ENCODE measurements at regions of chr11 and their contacts with region 1.

Region 1: GRCh38 chr11:122853971-122854446 is 15.7 kb downstream of the CRTAM start:
- DNase-seq: no peak
- ATAC-seq: no peak
- H3K4me3 ChIP-seq: no peak overlapping the region
- H3K27ac ChIP-seq: no peak overlapping the region
- H3K4me1 ChIP-seq: peaks cover 24% of the 10 kb centered on the region
- H3K27me3 ChIP-seq: no peaks in the 10 kb centered on the region
- CTCF ChIP-seq: peak; percentile 53 to 78 (median 73)
- EP300 ChIP-seq: no peak
- POLR2A ChIP-seq: no peak
- RAD21 ChIP-seq: peak; percentile 87

Region 2: GRCh38 chr11:122628810-122629555 is 225.0 kb before region 1 on chr11:
- CTCF ChIA-PET with region 1: interaction called, 27 read pairs
- POLR2A ChIA-PET with region 1: no interaction called
- RAD21 ChIA-PET with region 1: interaction called, 9 read pairs
- SMC1A ChIA-PET with region 1: interaction called, 12 read pairs
- in situ Hi-C with region 1: no loop called
- intact Hi-C with region 1: loop called (anchors 1 kb)
- DNase-seq: no peak
- ATAC-seq: peak; percentile 95
- H3K4me3 ChIP-seq: no peak overlapping the region
- H3K27ac ChIP-seq: no peak overlapping the region
- H3K4me1 ChIP-seq: no peaks in the 10 kb centered on the region
- H3K27me3 ChIP-seq: no peaks in the 10 kb centered on the region; a peak in 2 of 4 replicates
- CTCF ChIP-seq: peak; percentile 76 to 81 (median 80)
- EP300 ChIP-seq: no peak
- POLR2A ChIP-seq: no peak
- RAD21 ChIP-seq: peak; percentile 84

Region 3: GRCh38 chr11:122721964-122722266 is 132.1 kb before region 1 on chr11:
- CTCF ChIA-PET with region 1: no interaction called
- POLR2A ChIA-PET with region 1: no interaction called
- RAD21 ChIA-PET with region 1: no interaction called
- SMC1A ChIA-PET with region 1: no interaction called
- in situ Hi-C with region 1: no loop called
- intact Hi-C with region 1: no loop called
- DNase-seq: no peak
- ATAC-seq: no peak
- H3K4me3 ChIP-seq: no peak overlapping the region
- H3K27ac ChIP-seq: no peak overlapping the region
- H3K4me1 ChIP-seq: peaks cover 20% of the 10 kb centered on the region
- H3K27me3 ChIP-seq: peaks cover 0 to 1% of the 10 kb centered on the region in 2 experiments; a peak in 2 of 4 replicates
- CTCF ChIP-seq: no peak
- EP300 ChIP-seq: no peak
- POLR2A ChIP-seq: no peak
- RAD21 ChIP-seq: no peak

Region 4: GRCh38 chr11:122781378-122782195 is 72.4 kb before region 1 on chr11:
- CTCF ChIA-PET with region 1: interaction called, 490 read pairs
- POLR2A ChIA-PET with region 1: interaction called, 4 read pairs
- RAD21 ChIA-PET with region 1: interaction called, 6 read pairs
- SMC1A ChIA-PET with region 1: interaction called, 15 read pairs
- in situ Hi-C with region 1: no loop called
- intact Hi-C with region 1: no loop called
- DNase-seq: no peak
- ATAC-seq: peak; percentile 96
- H3K4me3 ChIP-seq: no peak overlapping the region
- H3K27ac ChIP-seq: no peak overlapping the region
- H3K4me1 ChIP-seq: no peaks in the 10 kb centered on the region
- H3K27me3 ChIP-seq: no peaks in the 10 kb centered on the region; a peak in 1 of 4 replicates
- CTCF ChIP-seq: peak; percentile 84 to 91 (median 85)
- EP300 ChIP-seq: no peak
- POLR2A ChIP-seq: no peak
- RAD21 ChIP-seq: peak; percentile 87

Region 5: DNA sequence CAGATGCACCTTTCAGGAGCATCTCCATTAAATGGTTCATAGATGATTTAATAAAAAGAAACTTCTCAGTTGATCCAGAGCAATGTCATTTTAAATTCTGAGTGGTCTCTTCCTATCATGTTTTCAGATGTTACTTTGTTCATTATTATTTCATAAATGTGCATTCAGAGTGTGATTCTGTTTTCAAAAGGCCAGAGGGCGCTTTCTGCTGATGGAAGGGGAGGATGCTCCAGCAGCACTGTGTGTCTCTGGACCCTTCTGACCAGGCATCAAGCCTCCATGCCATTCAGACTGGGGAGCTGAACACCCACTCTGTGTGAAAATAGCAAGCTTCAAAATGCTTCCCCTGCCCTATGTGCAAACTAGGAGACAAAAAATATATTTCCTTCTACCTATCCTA is 39.6 kb before region 1 on chr11:
- CTCF ChIA-PET with region 1: interaction called, 484 read pairs
- POLR2A ChIA-PET with region 1: interaction called, 34 read pairs
- RAD21 ChIA-PET with region 1: interaction called, 293 read pairs
- SMC1A ChIA-PET with region 1: interaction called, 485 read pairs
- in situ Hi-C with region 1: no loop called
- intact Hi-C with region 1: loop called (anchors 1 kb)
- DNase-seq: no peak
- ATAC-seq: peak; percentile 93
- H3K4me3 ChIP-seq: no peak overlapping the region
- H3K27ac ChIP-seq: no peak overlapping the region
- H3K4me1 ChIP-seq: no peaks in the 10 kb centered on the region; the same call in 1 of the 2 replicates
- H3K27me3 ChIP-seq: no peaks in the 10 kb centered on the region
- CTCF ChIP-seq: peak; percentile 22 to 51 (median 28); a peak in 3 of 6 replicates
- EP300 ChIP-seq: no peak
- POLR2A ChIP-seq: no peak
- RAD21 ChIP-seq: peak; percentile 60

Region 6: GRCh38 chr11:122869622-122870021 is 15.6 kb after region 1 on chr11:
- CTCF ChIA-PET with region 1: interaction called, 275 read pairs
- POLR2A ChIA-PET with region 1: interaction called, 12 read pairs
- RAD21 ChIA-PET with region 1: interaction called, 46 read pairs
- SMC1A ChIA-PET with region 1: interaction called, 466 read pairs
- in situ Hi-C with region 1: no loop called
- intact Hi-C with region 1: no loop called
- DNase-seq: no peak
- ATAC-seq: peak; percentile 62
- H3K4me3 ChIP-seq: no peak overlapping the region
- H3K27ac ChIP-seq: no peak overlapping the region
- H3K4me1 ChIP-seq: no peaks in the 10 kb centered on the region; the same call in 1 of the 2 replicates
- H3K27me3 ChIP-seq: no peaks in the 10 kb centered on the region
- CTCF ChIP-seq: no peak
- EP300 ChIP-seq: no peak
- POLR2A ChIP-seq: no peak
- RAD21 ChIP-seq: no peak

Region 7: GRCh38 chr11:122920579-122920978 is 66.6 kb after region 1 on chr11:
- CTCF ChIA-PET with region 1: no interaction called
- POLR2A ChIA-PET with region 1: no interaction called
- RAD21 ChIA-PET with region 1: no interaction called
- SMC1A ChIA-PET with region 1: no interaction called
- in situ Hi-C with region 1: no loop called
- intact Hi-C with region 1: no loop called
- DNase-seq: no peak
- ATAC-seq: no peak
- H3K4me3 ChIP-seq: no peak overlapping the region
- H3K27ac ChIP-seq: no peak overlapping the region
- H3K4me1 ChIP-seq: no peaks in the 10 kb centered on the region
- H3K27me3 ChIP-seq: no peaks in the 10 kb centered on the region
- CTCF ChIP-seq: no peak
- EP300 ChIP-seq: no peak
- POLR2A ChIP-seq: no peak
- RAD21 ChIP-seq: no peak

Region 8: DNA sequence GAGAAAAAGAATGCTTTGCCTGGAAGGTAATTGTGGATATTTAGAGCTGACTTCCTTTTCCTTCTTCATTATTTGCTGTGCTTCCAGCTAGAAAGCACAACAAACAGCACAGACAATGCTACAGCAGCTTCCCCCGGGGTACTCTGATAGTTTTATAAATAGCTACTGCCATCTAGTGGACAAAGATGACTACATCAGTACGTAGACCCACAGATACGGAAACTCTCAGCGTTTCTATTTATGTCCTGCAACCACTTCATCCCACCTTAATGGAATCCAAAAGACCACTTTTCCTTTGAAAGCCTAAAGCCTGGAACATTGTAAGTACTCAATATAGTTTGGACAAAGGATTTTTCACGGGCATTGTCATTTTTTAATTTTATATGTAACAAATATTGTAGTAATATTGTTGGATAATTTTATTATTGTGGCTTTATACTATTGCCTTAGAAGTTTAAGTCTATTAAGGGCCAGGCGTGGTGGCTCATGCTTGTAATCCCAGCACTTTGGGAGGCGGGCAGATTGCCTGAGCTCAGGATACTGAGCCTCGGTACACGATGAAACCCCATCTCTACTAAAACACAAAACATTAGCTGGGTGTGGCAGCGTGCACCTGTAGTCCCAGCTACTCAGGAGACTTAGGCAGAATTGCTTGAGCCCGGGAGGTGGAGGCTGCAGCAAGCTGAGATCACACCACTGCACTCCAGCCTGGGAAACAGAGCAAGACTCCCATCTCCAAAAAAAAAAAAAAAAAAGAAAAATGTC is 200.5 kb after region 1 on chr11:
- CTCF ChIA-PET with region 1: interaction called, 387 read pairs
- POLR2A ChIA-PET with region 1: interaction called, 6 read pairs
- RAD21 ChIA-PET with region 1: interaction called, 50 read pairs
- SMC1A ChIA-PET with region 1: interaction called, 159 read pairs
- in situ Hi-C with region 1: no loop called
- intact Hi-C with region 1: no loop called
- DNase-seq: no peak
- ATAC-seq: peak; percentile 87
- H3K4me3 ChIP-seq: no peak overlapping the region
- H3K27ac ChIP-seq: no peak overlapping the region
- H3K4me1 ChIP-seq: no peaks in the 10 kb centered on the region; the same call in 1 of the 2 replicates
- H3K27me3 ChIP-seq: no peaks in the 10 kb centered on the region
- CTCF ChIP-seq: peak; percentile 61 to 74 (median 63)
- EP300 ChIP-seq: no peak
- POLR2A ChIP-seq: no peak
- RAD21 ChIP-seq: peak; percentile 58

Region 9: GRCh38 chr11:123357961-123358841 is 504.2 kb after region 1 on chr11:
- CTCF ChIA-PET with region 1: no interaction called
- POLR2A ChIA-PET with region 1: no interaction called
- RAD21 ChIA-PET with region 1: no interaction called
- SMC1A ChIA-PET with region 1: no interaction called
- in situ Hi-C with region 1: no loop called
- intact Hi-C with region 1: no loop called
- DNase-seq: peak; percentile 34
- ATAC-seq: peak; percentile 80
- H3K4me3 ChIP-seq: peak overlapping the region; percentile 91
- H3K27ac ChIP-seq: peak overlapping the region; percentile 27; the same call in 1 of the 2 replicates
- H3K4me1 ChIP-seq: peaks cover 7% of the 10 kb centered on the region; the same call in 1 of the 2 replicates
- H3K27me3 ChIP-seq: no peaks in the 10 kb centered on the region
- CTCF ChIP-seq: peak; percentile 20 to 43 (median 27); a peak in 4 of 6 replicates
- EP300 ChIP-seq: no peak
- POLR2A ChIP-seq: peak; percentile 76
- RAD21 ChIP-seq: peak; percentile 56

Region 10: GRCh38 chr11:123580557-123581275 is 726.7 kb after region 1 on chr11:
- CTCF ChIA-PET with region 1: no interaction called
- POLR2A ChIA-PET with region 1: no interaction called
- RAD21 ChIA-PET with region 1: no interaction called
- SMC1A ChIA-PET with region 1: no interaction called
- in situ Hi-C with region 1: no loop called
- intact Hi-C with region 1: no loop called
- DNase-seq: no peak
- ATAC-seq: peak; percentile 93
- H3K4me3 ChIP-seq: no peak overlapping the region
- H3K27ac ChIP-seq: no peak overlapping the region
- H3K4me1 ChIP-seq: peaks cover 9% of the 10 kb centered on the region
- H3K27me3 ChIP-seq: no peaks in the 10 kb centered on the region
- CTCF ChIP-seq: peak; percentile 94 to 100 (median 96)
- EP300 ChIP-seq: no peak
- POLR2A ChIP-seq: no peak
- RAD21 ChIP-seq: peak; percentile 71

Measured in GM12878 (cell line).